ENCODE measurements at regions of chr2 and their contacts with region 1.

Region 1: DNA sequence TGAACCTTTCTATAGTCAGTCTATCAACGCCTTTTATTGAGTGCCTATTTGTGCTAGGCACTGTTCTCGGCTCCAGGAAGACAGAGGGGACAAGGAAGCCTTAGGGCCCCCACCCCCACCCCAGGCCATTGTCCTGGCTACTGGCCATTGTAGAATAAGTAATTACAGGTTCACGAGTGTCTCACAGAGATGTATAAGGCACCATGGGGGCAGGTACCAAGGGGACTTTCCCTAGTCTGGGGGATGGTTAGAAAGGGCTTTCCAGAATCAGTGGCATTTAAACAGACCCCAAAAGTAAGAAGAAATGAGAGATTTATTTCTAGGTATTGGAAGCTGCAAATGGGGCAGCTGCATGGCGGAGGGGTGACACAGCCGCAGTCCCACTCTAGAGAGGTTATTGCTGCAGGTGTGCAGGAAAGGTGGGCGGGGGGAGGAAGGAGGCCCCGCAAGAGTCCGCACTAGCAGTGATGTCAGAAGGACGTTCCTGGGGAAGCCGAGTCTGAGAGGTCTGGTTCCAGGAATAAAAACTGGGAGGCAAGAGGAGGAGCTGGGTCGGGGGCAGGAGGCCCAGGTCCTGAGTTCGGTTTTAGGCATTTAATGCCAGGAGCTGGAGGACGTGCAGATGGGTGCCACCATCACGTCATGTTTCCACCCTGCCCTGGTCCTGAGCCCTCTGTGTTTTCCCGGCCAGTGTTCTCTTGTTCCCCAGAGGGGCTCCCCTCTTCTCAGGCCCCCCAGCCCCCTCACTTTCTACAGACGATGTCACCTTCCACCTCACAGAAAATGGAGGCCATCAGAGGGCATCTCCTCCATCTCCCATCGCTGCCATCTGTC is 30.5 kb downstream of the FOSL2 start:
- DNase-seq: no peak
- H3K4me3 ChIP-seq: no peak overlapping the region
- H3K27ac ChIP-seq: no peak overlapping the region
- H3K4me1 ChIP-seq: no peaks in the 10 kb centered on the region
- H3K27me3 ChIP-seq: no peaks in the 10 kb centered on the region
- CTCF ChIP-seq: no peak

Region 2: GRCh38 chr2:27735263-27735953 is 687.7 kb before region 1 on chr2:
- CTCF ChIA-PET with region 1: no interaction called
- POLR2A ChIA-PET with region 1: interaction called, 25 read pairs
- intact Hi-C with region 1: no loop called
- DNase-seq: peak; percentile 56 to 81
- H3K4me3 ChIP-seq: peak overlapping the region; percentile 72
- H3K27ac ChIP-seq: peak overlapping the region; percentile 75
- H3K4me1 ChIP-seq: peaks cover 56% of the 10 kb centered on the region
- H3K27me3 ChIP-seq: no peaks in the 10 kb centered on the region
- CTCF ChIP-seq: no peak; the same call in 1 of the 2 replicates

Region 3: GRCh38 chr2:28377984-28378678 is 45.0 kb before region 1 on chr2:
- CTCF ChIA-PET with region 1: no interaction called
- POLR2A ChIA-PET with region 1: no interaction called
- intact Hi-C with region 1: no loop called
- DNase-seq: peak in 1 of 2 experiments; percentile 63
- H3K4me3 ChIP-seq: no peak overlapping the region
- H3K27ac ChIP-seq: no peak overlapping the region
- H3K4me1 ChIP-seq: peaks cover 27% of the 10 kb centered on the region
- H3K27me3 ChIP-seq: no peaks in the 10 kb centered on the region
- CTCF ChIP-seq: no peak

Region 4: DNA sequence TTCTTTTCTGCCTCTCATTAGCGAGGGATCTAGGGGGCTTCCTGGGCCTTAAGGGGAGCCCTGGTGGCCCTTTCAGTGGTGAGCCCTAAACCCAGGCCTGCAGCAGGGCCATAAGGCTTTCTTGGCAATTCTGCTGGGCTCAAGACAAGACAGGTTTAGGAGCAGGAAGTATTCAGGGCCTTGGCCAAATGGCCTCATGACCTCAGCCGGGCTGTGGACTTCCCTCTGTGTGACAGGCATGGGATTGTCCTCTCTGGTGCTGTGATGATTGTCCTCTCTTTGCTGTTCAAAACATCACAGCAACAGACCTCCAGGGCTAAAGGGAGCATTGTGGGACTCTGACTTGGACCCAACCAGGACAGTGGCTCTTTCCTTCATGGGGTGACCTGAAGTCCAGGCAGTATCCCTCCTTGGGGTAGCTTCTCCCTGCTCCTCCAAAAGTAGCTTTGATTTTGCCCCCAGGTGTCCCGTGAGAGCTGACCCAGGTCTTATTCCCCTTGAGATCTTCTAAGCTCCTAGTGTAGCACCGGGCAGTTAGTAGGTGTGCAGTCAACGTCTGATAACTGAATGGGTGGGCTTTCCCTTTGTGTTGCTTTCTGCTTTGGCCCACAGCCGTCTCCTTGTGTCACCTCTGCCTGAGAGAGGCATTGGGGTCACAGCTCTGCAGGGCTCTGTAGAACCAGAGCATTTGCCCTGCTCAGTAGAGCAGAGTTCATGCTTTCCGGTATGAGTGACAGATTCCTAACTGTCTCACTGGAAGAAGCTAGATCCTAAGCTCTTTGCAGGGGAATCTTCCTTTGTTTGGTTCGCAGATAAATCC is 15.8 kb before region 1 on chr2:
- CTCF ChIA-PET with region 1: no interaction called
- POLR2A ChIA-PET with region 1: no interaction called
- intact Hi-C with region 1: no loop called
- DNase-seq: no peak
- H3K4me3 ChIP-seq: no peak overlapping the region
- H3K27ac ChIP-seq: peak overlapping the region; percentile 23; the same call in 1 of the 2 replicates
- H3K4me1 ChIP-seq: no peaks in the 10 kb centered on the region
- H3K27me3 ChIP-seq: no peaks in the 10 kb centered on the region
- CTCF ChIP-seq: no peak

Measured in PC-9 (cell line).